ENCODE measurements at regions of chr5 and their contacts with region 1.

Region 1: DNA sequence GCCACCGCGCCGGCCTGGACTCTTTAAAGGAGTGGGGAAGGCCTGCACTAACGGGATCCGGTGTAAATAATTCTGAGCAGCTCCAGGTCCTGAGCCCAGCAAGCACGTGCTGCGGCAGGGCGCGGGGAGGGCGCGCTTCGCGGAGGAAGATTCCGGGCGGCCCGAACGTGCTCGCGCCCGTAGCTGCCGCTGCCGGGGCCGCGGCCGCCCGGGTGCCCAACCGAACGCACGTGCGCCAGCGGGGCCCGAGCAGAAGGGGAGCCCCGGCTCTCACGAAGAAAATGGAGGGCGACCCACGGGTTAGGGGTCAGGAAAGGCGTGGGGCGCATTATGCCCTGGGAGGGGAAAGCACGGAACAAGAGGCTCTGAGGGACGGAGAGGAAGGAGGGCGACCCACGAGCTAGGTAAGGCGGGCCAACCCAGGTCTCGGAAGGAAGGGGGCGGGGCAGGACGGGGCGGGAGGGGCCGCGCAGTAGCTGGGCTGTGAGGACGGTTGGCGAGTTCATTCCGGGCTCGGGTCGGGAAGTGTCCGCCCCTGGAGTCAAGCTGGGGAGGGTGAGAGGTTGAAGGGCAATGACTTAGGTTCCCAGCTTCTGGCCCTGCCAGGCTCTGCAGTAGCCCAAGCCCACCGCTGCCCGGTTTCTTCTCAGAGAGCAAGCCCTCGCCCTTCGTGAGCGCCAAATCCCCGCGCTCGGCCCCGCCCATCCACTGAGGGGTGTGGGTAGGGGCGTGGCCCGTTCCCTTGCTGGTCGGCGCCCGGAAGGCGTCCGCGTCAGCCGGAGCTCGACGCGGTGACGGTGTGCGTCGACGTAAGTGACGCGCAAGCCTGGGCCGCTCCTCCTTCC is at the start of gene ZNF131:
- DNase-seq: peak; percentile 96
- H3K4me3 Mint-ChIP-seq: peak within 1 kb of the TSS; percentile 99
- H3K27ac Mint-ChIP-seq: peak within 1 kb of the TSS; percentile 96
- H3K4me1 Mint-ChIP-seq: peaks cover 38% of the 10 kb centered on the region
- H3K27me3 Mint-ChIP-seq: no peaks in the 10 kb centered on the region
- total RNA-seq, gene ZNF131: 25.0 to 29.6 TPM

Region 2: GRCh38 chr5:42854807-42855206 is 266.1 kb before region 1 on chr5:
- CTCF ChIA-PET with region 1: no interaction called
- intact Hi-C with region 1: no loop called
- DNase-seq: no peak
- H3K4me3 Mint-ChIP-seq: no peak overlapping the region
- H3K27ac Mint-ChIP-seq: no peak overlapping the region
- H3K4me1 Mint-ChIP-seq: no peaks in the 10 kb centered on the region
- H3K27me3 Mint-ChIP-seq: peaks cover 1% of the 10 kb centered on the region

Region 3: GRCh38 chr5:42994246-42995151 is 126.4 kb before region 1 on chr5:
- CTCF ChIA-PET with region 1: no interaction called
- intact Hi-C with region 1: loop called (anchors 1 kb)
- DNase-seq: peak; percentile 94
- H3K4me3 Mint-ChIP-seq: peak overlapping the region; percentile 99
- H3K27ac Mint-ChIP-seq: peak overlapping the region; percentile 100
- H3K4me1 Mint-ChIP-seq: peaks cover 17% of the 10 kb centered on the region
- H3K27me3 Mint-ChIP-seq: no peaks in the 10 kb centered on the region

Region 4: DNA sequence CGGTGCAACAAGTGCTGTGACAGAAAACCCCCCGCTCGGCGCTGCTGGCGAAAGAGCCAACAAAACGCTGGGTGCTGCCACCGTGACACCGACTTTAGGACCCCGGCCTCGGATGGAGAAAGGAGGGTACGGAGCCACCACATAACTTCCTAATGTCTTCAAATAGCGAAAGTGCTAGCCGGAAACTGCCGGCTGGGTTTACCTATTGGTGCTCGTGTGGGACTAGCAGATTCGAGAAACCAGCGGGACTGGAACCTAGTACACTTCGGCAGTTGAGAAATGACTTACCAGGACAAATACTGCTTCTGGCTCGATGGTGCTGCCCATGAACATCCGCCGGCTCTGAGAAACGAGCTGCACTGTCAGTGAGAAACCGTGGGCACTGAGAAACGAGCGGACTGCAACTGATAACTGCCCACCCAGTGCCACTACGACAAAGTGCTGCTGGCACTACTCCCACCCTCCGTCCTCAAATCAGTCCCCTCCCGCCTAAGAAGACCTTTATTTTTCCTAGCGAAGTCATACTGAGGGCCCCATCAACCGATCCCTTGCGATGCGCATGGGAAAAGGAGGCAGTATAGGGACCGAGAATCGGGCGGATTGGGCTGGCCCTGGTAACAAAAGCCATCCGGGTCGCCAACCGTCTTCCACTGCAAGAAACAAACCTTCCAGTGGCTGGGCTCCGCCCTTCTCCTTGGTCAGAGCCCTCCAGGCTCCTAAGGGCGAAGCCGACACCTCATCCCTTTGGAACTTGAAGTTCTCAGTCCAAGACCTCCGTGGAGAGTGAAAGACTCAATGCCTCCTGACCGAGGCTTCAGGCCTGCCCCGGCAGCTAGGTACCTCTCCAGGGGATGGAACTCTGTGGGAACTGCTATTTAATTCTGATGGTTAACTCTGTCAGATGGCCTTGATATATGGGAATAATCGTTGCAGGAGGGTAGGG is 53.9 kb before region 1 on chr5:
- CTCF ChIA-PET with region 1: interaction called, 5 read pairs
- intact Hi-C with region 1: loop called (anchors 1 kb)
- DNase-seq: peak; percentile 92
- H3K4me3 Mint-ChIP-seq: peak overlapping the region; percentile 98
- H3K27ac Mint-ChIP-seq: peak overlapping the region; percentile 98
- H3K4me1 Mint-ChIP-seq: peaks cover 36% of the 10 kb centered on the region
- H3K27me3 Mint-ChIP-seq: no peaks in the 10 kb centered on the region

Region 5: DNA sequence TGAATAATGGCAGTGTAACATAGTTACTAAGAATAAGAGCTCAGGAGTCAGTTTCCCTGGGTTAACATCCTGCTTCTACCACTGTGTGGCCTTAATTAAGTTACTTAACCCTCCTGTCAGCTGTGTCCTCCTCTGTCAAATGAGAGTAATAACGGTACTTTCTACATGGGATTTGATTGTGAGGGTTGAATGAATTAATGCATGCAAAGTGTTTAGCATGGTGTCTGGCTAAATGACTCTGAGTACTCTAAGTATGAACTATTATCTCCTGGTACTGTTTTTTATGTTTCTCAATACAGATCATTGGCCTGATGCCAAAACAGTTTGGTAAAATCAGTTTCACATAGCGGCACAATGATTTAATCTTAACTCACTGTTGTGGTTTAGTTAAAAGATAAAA is 19.3 kb after region 1 on chr5:
- CTCF ChIA-PET with region 1: interaction called, 4 read pairs
- intact Hi-C with region 1: loop called (anchors 1 kb)
- DNase-seq: no peak
- H3K4me3 Mint-ChIP-seq: no peak overlapping the region
- H3K27ac Mint-ChIP-seq: peak overlapping the region; percentile 30
- H3K4me1 Mint-ChIP-seq: peaks cover 45% of the 10 kb centered on the region
- H3K27me3 Mint-ChIP-seq: no peaks in the 10 kb centered on the region

Region 6: GRCh38 chr5:43396762-43397304 is 275.9 kb after region 1 on chr5:
- CTCF ChIA-PET with region 1: no interaction called
- intact Hi-C with region 1: loop called (anchors 2 kb)
- DNase-seq: peak; percentile 75
- H3K4me3 Mint-ChIP-seq: peak overlapping the region; percentile 88
- H3K27ac Mint-ChIP-seq: peak overlapping the region; percentile 87
- H3K4me1 Mint-ChIP-seq: peaks cover 32% of the 10 kb centered on the region
- H3K27me3 Mint-ChIP-seq: no peaks in the 10 kb centered on the region

Region 7: GRCh38 chr5:44808435-44809214 is 1687.7 kb after region 1 on chr5 and contains the start of gene MRPS30:
- CTCF ChIA-PET with region 1: no interaction called
- intact Hi-C with region 1: loop called (anchors 10 kb)
- DNase-seq: peak; percentile 96
- H3K4me3 Mint-ChIP-seq: peak within 1 kb of the TSS; percentile 96
- H3K27ac Mint-ChIP-seq: peak within 1 kb of the TSS; percentile 95
- H3K4me1 Mint-ChIP-seq: peaks cover 16% of the 10 kb centered on the region
- H3K27me3 Mint-ChIP-seq: peaks cover 1% of the 10 kb centered on the region
- total RNA-seq, gene MRPS30: 46.1 to 49.3 TPM